Posterior cingulate gyrus (tissue), 11 donors: ENCODE measurements at regions of chr18 and their contacts with region 1.

Region 1: GRCh38 chr18:8988261-8988871 is 114.1 kb upstream of the NDUFV2 start:
- DNase-seq: peak; percentile 16 to 95 (median 70)

Region 2: DNA sequence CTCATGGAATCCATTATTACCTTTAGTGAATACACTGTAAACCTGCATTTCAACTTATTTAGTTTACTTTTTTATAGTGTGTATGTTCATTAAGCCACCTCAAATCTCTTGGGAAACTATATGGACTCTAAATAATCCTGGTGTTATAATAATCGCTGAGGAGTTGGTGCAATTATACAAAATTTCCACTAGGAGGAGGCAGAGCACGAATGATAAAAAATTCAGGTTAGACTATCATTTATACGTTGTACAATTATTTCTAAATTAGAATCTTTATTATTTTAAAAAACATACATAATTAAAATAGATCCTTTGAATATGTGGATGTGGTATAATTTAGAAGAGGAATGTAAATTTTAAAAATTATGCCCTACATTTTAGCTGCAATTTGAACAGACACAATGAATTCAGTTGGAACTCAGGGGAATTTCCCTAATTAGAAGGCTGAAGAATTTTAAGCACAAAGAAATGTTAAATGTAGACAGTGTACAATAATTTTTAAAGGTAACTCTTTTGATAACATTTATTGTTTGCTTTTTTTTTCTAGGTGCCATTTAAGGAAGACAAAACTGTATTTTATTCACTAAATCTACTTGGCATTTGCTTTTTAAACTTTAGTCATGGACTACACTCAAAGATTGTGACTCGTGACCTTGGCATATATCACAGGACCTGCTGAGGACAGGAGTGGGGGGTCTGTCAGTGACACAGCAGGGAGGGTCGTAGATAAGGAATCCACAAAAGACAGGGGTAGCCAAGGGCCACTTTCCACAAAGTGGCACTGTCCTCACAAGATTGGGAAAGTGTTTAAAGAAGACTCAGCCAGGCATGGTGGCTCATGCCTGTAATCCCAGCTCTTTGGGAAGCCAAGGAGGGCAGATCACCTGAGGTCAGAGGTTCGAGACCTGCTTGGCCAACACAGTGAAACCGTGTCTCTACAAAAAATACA is 333.6 kb before region 1 on chr18:
- intact Hi-C with region 1: loop called (anchors 2 kb)
- DNase-seq: no peak

Region 3: GRCh38 chr18:8696749-8697211 is 291.6 kb before region 1 on chr18:
- intact Hi-C with region 1: loop called (anchors 5 kb)
- DNase-seq: peak in 8 of 10 donors; percentile 55 to 96 (median 81)